ENCODE measurements at regions of chr2 and their contacts with region 1.

Region 1: GRCh38 chr2:237512774-237513466 is 25.9 kb downstream of the MLPH start:
- DNase-seq: peak; percentile 91
- ATAC-seq: peak; percentile 74

Region 2: DNA sequence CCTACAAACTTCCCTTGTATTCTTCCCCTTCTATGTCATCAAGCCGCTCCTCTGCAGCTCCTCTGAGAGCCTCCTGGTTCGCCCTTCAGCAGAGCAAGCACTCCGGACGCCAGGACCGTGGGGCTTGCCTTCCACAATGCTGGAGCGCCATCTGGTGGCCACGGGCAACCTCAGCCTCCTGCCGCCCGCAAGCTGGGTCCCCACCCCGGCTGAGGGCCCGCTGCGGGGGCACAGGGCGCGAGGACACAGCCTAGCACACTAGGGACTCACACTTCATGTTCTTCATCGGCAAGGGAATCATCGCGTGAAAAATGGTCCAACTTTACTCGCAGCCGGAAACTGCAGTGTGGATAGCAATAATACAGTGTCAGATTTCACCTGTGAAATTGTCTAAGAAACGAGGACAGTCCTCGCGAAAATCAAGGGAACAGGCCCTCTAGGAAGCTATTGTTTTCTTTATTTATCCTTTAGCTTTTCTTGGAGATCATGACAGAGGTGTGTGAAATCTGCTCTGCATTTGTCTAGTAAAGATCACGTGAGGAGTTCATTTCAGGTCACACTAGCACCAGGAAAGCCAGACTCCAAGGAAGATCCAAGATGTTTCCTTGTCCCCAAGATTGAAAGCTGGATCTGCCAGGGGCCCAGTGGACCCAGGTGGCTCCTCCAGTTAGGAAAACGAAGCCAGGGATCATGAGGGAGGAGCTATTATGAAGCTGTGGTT is 59.3 kb after region 1 on chr2:
- intact Hi-C with region 1: loop called (anchors 2 kb)
- DNase-seq: peak; percentile 93
- ATAC-seq: peak; percentile 95